ENCODE measurements at regions of chr5 and their contacts with region 1.

Region 1: GRCh38 chr5:115069087-115069968 is 100.4 kb downstream of the TRIM36 start:
- DNase-seq: peak in 8 of 10 donors; percentile 26 to 66 (median 44)
- H3K4me3 ChIP-seq: no peak overlapping the region
- H3K27ac ChIP-seq: no peak overlapping the region
- H3K27me3 ChIP-seq: peaks cover 0 to 8% (median 0%) of the 10 kb centered on the region in 45 donors
- CTCF ChIP-seq: peak; percentile 50 to 89 (median 74)

Region 2: GRCh38 chr5:113612060-113612496 is 1457.2 kb before region 1 on chr5:
- intact Hi-C with region 1: loop called in 1 of 2 experiments (anchors 5 kb)
- DNase-seq: no peak
- H3K4me3 ChIP-seq: no peak overlapping the region
- H3K27ac ChIP-seq: no peak overlapping the region
- H3K27me3 ChIP-seq: peaks cover 0 to 3% (median 0%) of the 10 kb centered on the region in 45 donors
- CTCF ChIP-seq: peak; percentile 53 to 86 (median 71)

Region 3: GRCh38 chr5:114018186-114018585 is 1051.1 kb before region 1 on chr5:
- intact Hi-C with region 1: loop called in 1 of 2 experiments (anchors 5 kb)
- DNase-seq: no peak
- H3K4me3 ChIP-seq: no peak overlapping the region
- H3K27ac ChIP-seq: no peak overlapping the region
- H3K27me3 ChIP-seq: peaks cover 0 to 5% (median 0%) of the 10 kb centered on the region in 45 donors
- CTCF ChIP-seq: peak in 53 of 56 donors; percentile 37 to 75 (median 58)

Region 4: DNA sequence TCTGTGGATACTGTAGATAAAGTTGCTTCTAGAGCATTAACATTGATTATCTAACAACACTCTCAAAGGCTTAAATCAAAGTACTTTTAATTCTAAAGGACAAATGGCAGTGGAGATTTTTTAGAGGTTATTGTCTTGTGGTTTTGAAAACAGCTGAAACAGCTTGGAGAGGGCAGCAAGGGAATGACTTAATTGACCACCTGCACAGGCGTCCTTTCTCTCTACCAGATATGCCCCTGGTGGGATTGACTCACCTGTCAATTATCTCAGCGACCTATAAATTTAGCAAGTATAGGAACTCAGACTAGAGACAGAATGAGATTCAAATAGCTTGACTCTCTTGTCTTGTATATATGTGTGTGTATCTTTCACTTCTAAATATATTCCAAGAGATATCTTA is 976.5 kb after region 1 on chr5:
- intact Hi-C with region 1: no loop called
- DNase-seq: no peak
- H3K4me3 ChIP-seq: no peak overlapping the region
- H3K27ac ChIP-seq: no peak overlapping the region
- H3K27me3 ChIP-seq: peaks cover 0 to 4% (median 0%) of the 10 kb centered on the region in 45 donors
- CTCF ChIP-seq: no peak

Measured in dorsolateral prefrontal cortex (tissue), 120 donors.